Common myeloid progenitor, CD34-positive (primary cell): ENCODE measurements at regions of chr3 and their contacts with region 1.

Region 1: GRCh38 chr3:190017521-190018288 is 103.0 kb downstream of the P3H2 start:
- DNase-seq: peak; percentile 55 to 60 (median 59)
- H3K4me3 ChIP-seq: peak overlapping the region in 1 of 7 experiments; percentile 33
- H3K27ac ChIP-seq: no peak overlapping the region
- H3K4me1 ChIP-seq: peaks cover 0 to 4% (median 0%) of the 10 kb centered on the region in 4 experiments
- H3K27me3 ChIP-seq: peaks cover 0 to 2% (median 0%) of the 10 kb centered on the region in 5 experiments

Region 2: DNA sequence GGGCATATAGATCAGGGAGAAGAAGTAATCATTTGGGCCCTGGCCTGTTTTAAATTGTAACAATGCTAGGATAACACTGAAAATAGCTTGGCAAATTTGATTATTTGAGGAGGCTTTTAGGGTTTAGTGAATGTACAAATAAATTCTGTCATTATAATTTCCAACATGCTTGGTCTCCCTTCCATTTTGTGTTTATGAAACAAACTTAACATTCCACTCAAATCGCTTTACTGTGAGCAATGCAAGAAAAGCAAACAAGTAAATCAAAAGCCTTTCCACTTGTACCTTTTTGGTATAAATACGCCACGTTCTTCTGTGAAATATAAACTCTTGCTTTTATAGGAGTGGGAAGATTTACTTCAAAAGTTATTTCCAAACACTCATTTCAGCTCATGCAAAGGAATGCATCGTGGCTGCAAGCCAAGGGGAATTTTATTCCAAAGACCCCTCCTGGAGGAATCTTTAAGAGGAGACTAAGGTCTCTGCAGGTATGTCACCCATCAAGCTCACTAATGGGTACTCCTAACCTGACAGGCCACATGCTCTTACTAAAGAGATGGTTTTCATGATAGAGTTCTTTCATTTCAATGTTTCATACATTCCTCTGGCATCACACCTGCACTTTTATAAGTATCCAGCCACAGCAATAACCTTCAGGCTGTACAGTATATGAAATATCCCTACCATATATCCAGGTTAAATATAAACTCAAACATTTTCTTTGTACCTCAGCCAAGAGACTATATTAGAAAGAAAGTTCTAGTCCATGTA is 12.2 kb before region 1 on chr3:
- CTCF ChIA-PET with region 1: interaction called, 12 read pairs
- POLR2A ChIA-PET with region 1: no interaction called
- DNase-seq: no peak
- H3K4me3 ChIP-seq: no peak overlapping the region
- H3K27ac ChIP-seq: no peak overlapping the region
- H3K4me1 ChIP-seq: no peaks in the 10 kb centered on the region
- H3K27me3 ChIP-seq: no peaks in the 10 kb centered on the region